Posterior vena cava (tissue), 2 donors: ENCODE measurements at regions of chr17 and their contacts with region 1.

Region 1: DNA sequence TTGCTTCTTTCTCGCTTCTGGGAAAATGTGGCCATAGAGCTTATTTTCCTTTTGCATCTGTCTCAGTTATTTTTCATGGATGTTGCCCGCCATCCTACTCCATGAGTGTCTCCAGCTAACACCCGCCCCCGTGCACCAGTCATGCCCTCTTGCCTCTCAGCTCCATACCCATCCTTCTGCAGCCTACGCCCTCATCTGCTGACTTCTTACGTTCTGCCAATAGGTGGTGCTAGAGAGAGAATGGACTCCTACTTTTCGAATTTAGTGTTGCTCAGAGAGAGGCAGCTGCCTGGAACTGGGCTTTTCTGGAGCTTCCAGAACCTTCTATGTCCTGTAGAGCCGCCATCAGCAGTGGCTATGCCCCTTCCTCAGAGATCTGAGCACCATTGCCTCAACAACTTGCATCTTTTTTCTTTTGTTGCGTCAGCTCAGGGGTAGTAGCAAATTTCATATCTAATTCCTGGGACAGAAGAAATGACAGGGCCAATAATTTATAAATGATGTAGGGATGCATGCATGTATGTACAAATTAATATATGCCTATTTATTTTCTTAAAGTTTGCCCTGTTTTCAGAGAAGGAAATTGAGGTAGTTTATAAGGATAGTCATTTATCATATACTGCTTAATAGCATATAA is 119.7 kb upstream of the MYOCD start:
- DNase-seq: no peak

Region 2: GRCh38 chr17:12328204-12328603 is 217.8 kb before region 1 on chr17:
- intact Hi-C with region 1: no loop called
- DNase-seq: no peak

Region 3: GRCh38 chr17:12388226-12388625 is 157.8 kb before region 1 on chr17:
- intact Hi-C with region 1: no loop called
- DNase-seq: no peak

Region 4: DNA sequence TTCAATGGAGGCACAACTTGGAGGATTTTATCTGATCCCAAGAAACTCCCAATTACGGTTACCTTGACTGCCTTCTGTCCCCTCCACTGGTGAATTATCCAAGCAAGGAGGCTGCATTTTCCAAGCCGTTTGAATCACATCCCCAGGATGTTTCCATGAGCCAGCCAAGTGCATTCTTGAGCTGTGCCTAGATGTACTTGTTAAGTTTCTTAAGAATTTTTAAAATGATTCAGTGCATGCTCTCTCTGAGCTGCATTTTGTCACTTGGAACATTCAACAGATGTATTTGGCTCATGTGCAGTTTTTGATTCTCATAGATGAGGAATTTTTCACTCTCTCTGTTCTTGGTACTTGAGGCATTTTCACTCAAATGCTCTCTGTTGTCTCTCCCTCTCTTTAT is 82.9 kb before region 1 on chr17:
- intact Hi-C with region 1: no loop called
- DNase-seq: no peak

Region 5: DNA sequence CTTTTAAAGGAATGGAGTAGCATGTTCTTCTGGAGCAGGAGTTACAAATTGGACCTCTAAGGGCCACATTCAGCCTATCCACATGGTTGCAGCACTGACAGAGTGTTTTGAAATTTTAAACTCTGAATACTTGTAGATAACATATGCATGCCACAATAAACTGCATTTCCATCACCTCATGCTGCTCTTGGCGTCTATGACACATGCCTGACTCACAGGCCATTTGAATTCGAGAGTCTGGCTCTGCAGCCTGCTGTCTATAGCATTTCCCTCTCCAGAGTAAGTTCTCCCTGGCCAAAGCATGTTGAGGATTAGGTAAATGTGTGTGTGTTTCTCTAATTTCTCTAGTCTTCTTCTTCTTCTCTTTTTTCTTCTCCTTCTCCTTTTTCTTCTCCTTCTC is 91.0 kb after region 1 on chr17:
- intact Hi-C with region 1: loop called in 1 of 2 experiments (anchors 10 kb)
- DNase-seq: no peak

Region 6: DNA sequence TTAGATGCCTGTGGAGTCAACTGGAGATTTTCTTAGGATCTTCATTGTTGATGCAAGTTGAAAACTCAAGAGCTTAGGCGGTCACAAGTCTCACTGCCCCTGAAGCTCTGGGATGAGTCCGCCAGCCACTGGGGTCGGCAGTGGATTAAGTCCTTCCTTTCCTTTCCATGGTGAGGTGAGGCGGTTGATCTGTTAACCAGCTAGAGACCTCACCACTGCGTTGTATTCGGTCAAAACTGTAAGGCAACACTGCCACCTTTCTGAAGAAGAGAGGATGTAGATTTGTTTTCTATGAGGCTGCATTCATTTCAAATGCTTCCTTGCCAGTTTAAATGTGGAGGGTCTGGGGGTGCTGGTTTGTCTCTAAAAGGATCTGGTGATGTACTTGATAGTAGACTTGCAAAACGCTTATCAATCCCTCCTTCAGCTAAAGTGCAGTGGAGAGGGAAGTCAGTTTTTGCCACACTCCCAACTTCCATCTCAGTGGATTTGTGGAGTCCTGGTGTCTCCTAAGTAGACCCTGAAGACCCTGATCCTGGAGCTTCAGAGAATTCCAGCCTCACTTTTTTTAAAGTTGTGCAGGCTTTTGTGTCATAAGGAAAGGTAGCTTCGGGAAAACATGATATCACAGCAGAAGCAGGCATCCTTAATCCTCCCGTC is 121.4 kb after region 1 on chr17:
- intact Hi-C with region 1: loop called in 1 of 2 experiments (anchors 10 kb)
- DNase-seq: no peak

Region 7: DNA sequence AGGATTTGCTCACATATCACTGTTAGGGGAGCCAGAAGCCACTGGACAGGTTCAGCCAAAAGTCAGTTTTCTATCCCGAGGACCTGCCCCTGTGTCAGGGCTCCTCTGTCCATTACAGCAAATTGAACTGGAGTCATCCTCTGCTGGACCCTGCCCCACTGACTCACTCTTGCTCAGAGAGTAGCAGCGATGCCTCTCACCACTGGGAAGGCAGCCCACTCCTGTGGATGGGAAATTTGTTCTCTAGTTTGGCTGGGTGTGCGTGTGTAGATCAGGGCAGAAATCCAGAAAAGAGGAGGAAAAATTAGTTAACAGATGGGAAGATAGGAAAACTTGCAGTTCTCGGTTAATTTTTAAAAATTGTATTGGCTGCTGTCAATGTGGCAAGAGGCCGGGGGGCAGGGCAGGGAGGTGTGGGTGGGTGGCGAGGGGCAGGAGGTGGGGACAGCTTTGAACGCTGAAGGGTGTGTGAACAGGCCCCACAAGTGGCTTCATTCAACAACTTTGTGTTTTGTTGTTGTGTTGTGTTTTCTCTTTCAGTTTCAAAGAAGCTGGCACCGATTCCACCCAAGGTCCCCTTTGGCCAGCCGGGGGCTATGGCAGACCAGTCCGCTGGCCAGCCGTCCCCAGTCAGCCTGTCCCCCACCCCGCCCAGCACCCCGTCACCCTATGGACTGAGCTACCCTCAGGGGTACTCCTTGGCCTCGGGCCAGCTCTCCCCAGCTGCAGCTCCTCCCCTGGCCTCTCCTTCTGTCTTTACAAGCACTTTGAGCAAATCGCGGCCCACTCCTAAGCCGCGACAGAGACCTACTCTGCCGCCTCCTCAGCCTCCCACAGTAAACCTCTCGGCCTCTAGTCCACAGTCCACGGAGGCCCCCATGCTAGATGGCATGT is 438.2 kb after region 1 on chr17:
- intact Hi-C with region 1: loop called in 1 of 2 experiments (anchors 10 kb)
- DNase-seq: peak; percentile 96